Right ventricle myocardium superior (tissue), 1 donor: ENCODE measurements at regions of chr15 and their contacts with region 1.

Region 1: GRCh38 chr15:45200001-45200798 is 12.4 kb upstream of the SHF start:
- DNase-seq: peak; percentile 95
- ATAC-seq: peak; percentile 75

Region 2: DNA sequence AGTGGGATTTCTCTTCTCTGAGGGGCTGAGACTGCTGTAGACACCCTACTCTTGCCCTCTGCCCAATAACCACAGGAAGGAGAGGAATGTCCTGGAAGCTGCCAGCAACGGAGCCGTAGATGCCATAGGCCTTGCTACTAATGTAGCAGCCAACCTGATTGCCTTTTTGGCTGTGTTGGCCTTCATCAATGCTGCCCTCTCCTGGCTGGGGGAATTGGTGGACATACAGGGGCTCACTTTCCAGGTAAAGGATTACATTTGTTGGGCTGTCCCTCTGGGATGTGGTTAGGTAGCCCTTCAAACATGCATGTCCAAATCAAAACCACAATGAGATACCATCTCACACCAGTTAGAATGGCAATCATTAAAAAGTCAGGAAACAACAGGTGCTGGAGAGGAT is 67.9 kb after region 1 on chr15:
- intact Hi-C with region 1: no loop called
- DNase-seq: no peak
- ATAC-seq: no peak

Region 3: DNA sequence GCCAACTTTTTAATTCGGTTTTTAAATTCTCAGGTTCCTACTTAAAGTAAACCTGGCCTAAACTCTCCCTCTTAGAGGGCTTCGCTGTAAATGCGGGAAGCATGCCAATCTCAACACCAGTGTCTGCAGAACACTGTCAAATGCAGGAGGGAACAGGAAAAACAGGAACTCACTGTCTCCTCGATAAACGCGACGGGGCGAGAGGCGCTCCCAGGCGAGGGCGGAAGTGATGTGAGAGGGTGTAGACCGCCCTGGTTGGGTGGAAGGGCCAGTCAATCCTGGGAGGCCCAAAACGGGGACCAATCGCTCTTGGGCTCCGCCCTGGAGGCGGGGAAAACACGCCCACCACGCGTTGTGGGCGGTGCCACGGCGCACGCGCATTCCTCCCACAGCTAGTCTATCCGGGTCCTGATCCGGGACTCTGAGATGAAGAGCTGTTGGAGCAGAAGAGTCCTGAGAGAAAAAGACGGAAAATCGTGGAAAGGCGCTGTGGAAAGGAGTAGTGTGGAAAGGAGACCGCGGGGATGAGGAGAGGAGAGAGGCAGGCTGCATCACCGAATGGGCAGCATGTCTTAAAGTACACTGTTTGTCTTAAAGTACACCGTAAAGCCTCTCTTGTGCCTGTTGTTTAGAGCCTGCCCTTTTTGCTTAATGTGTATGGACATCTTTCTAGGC is 79.0 kb after region 1 on chr15:
- intact Hi-C with region 1: loop called (anchors 2 kb)
- DNase-seq: peak; percentile 97
- ATAC-seq: peak; percentile 100

Region 4: DNA sequence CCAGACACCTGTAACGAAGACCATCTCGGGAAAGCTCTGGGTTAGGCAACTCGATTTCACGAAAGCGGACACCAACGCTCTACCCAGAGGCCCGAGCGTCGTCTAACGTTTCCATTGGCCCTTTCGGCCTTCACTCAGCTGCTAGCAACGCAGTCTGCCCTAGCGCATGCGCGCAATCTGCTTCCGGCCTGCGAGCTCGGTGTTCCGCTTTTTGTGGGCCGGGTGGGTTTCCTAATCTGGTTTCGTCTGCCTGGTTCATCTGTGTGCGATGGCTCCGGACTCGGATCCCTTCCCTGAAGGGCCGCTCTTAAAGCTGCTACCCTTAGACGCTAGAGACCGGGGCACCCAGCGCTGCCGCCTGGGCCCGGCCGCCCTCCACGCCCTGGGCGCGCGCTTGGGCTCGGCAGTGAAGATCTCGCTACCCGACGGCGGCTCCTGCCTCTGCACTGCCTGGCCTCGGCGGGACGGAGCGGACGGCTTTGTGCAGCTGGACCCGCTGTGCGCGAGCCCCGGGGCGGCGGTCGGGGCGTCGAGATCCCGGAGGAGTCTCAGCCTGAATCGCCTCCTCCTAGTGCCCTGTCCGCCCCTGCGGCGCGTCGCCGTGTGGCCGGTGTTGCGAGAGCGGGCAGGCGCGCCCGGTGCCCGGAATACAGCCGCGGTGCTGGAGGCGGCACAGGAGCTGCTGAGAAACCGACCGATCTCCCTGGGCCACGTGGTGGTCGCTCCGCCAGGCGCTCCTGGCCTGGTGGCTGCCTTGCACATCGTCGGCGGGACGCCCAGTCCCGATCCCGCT is 202.2 kb after region 1 on chr15:
- intact Hi-C with region 1: loop called (anchors 5 kb)
- DNase-seq: peak; percentile 97
- ATAC-seq: peak; percentile 98

Region 5: GRCh38 chr15:45471151-45471550 is 271.0 kb after region 1 on chr15:
- intact Hi-C with region 1: no loop called
- DNase-seq: no peak
- ATAC-seq: no peak

Region 6: DNA sequence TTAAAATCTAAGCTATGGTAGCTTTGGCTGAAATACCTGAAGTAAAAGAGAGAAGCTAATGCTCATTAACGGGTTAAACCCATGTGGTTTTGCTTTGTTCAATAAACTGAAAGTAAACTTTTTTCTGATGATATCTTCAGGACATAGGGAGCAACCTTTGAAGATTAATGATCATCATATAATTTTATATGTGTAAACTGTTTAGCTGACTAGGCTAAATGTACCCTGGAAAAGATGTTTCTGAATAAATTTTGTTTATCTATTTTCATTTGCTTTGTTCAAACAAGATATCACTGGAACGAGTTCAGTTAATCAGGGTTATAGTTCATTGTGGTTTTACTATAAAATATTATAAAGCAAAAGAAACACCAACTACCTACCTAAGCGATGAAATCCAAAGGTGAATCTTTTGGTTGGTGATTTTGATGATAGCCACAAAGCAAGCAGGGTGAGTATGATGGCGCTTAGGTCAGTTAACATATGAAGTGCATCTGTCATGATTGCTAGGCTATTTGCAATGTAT is 310.6 kb after region 1 on chr15:
- intact Hi-C with region 1: no loop called
- DNase-seq: no peak
- ATAC-seq: no peak